Dorsolateral prefrontal cortex (tissue), 120 donors: ENCODE measurements at regions of chr14 and their contacts with region 1.

Region 1: DNA sequence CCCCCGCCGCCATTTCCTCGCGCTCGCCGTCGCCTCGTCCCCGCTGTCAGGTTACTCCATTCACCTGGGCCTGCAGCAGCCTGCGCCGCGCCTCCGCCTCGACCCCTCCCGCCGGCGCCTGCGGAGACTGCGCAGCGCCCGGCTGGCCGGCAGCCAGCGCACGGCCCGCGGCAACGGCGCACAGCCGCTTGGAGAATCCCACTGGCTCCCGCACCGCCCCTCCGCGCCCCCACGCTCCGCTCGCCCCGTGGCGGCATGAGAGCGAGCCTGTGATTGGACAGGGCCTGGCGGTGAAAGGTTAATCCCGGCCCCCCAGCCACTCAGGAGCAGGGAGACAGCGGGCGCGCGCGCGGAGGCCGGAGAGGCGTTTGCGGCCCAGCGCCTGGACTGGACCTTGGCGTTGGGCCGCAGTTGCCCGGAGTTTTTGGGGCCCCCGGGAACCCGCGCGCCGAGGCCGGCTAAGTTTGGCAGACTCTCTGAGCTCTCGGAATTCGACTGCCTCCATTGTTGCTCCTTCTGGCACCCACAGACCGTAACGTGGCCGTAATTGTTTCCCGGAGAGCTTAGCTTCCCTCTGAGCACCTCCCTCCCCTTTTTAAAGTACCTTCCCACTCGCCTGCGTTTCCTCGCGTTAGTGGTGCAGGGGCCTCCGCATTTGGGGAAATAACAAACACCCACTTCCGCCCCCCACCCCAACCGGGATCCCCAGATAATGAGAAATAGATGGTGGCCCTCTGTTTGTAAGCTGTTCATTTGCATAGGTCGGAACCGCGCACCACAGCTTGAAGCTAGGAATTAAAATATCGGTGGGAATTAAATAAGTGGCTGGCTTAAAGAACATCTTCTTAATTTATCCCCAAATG is at the start of gene DICER1:
- DNase-seq: peak; percentile 96 to 99 (median 98)
- H3K4me3 ChIP-seq: peak within 1 kb of the TSS; percentile 63 to 95 (median 88)
- H3K27ac ChIP-seq: peak within 1 kb of the TSS; percentile 81 to 99 (median 95)
- H3K27me3 ChIP-seq: no peaks in the 10 kb centered on the region
- CTCF ChIP-seq: peak in 23 of 56 donors; percentile 1 to 51 (median 18)
- total RNA-seq, gene DICER1: 58.4 to 196 (median 82.9) TPM

Region 2: GRCh38 chr14:94918908-94919307 is 238.7 kb before region 1 on chr14:
- intact Hi-C with region 1: no loop called
- DNase-seq: no peak
- H3K4me3 ChIP-seq: no peak overlapping the region
- H3K27ac ChIP-seq: no peak overlapping the region
- H3K27me3 ChIP-seq: peaks cover 0 to 9% (median 0%) of the 10 kb centered on the region in 45 donors
- CTCF ChIP-seq: no peak

Region 3: DNA sequence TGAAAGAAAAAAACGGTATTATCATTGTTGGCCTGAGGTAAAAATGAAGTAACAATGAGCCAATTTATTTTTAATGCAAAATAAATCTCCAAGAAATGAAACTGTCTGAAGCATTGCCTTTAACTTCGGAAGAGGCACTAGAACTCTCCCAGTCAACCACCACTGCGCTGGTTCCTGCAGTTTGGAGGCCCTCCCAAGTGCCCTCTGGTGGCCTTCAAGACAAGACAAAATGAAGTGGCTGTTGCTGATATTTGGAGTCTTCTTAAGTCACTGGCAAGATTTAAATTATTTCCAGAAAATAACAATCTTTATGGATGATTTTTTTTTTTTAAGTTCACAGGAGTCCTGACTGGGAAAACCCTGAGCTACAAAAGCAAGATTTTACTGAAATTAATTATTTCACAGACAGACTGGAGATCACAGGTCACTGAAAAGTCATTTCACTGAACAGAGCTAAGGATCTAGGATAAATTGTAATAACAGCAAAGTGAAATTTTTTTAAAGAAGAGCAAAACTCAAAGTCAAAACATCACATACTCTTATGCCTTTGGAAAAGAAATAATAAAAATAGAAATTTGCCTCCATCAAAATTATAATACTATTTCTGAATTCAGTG is 58.5 kb before region 1 on chr14:
- intact Hi-C with region 1: loop called in 1 of 2 experiments (anchors 2 kb)
- DNase-seq: peak; percentile 27 to 67 (median 58)
- H3K4me3 ChIP-seq: no peak overlapping the region
- H3K27ac ChIP-seq: peak overlapping the region in 15 of 59 donors; percentile 4 to 80 (median 34)
- H3K27me3 ChIP-seq: no peaks in the 10 kb centered on the region
- CTCF ChIP-seq: peak in 55 of 56 donors; percentile 37 to 86 (median 67)

Region 4: DNA sequence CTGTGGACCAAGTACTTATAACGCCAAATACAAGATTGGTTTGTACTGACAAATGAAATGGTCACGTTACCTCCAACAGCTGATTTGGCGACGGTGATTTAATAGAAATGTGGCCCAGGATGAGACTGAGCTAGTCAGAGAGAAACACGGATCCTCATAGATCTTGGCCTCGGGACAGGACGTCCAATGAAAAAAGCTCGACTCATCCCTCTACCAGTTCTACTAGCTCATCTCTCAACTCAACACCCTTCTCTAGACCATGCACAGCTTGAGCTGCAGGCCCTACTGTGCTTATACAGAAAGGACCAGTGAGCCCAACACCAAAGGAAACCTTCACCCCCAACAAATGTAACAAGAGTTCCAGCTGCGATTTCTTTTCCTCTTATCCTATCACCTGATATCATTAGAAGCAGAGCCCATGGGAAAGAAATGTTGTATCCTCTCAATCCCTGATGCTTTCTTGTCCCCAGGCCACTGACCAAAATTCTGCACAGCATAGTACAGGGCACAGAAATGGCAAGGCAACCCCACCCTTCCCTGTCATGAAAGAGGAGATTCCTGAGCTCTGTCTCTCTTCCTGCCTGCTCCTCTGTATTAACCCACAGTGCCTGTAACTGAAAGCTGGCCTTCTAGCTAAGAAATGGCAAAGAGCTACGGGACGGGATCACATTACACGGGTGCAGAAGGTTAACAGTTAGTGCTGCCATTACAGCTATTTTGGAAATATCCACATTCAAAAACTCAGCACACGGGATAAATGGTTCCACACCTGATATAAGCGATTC is 39.4 kb before region 1 on chr14:
- intact Hi-C with region 1: loop called (anchors 2 to 5 kb)
- DNase-seq: no peak
- H3K4me3 ChIP-seq: no peak overlapping the region
- H3K27ac ChIP-seq: peak overlapping the region in 57 of 59 donors; percentile 29 to 98 (median 86)
- H3K27me3 ChIP-seq: no peaks in the 10 kb centered on the region
- CTCF ChIP-seq: no peak

Region 5: DNA sequence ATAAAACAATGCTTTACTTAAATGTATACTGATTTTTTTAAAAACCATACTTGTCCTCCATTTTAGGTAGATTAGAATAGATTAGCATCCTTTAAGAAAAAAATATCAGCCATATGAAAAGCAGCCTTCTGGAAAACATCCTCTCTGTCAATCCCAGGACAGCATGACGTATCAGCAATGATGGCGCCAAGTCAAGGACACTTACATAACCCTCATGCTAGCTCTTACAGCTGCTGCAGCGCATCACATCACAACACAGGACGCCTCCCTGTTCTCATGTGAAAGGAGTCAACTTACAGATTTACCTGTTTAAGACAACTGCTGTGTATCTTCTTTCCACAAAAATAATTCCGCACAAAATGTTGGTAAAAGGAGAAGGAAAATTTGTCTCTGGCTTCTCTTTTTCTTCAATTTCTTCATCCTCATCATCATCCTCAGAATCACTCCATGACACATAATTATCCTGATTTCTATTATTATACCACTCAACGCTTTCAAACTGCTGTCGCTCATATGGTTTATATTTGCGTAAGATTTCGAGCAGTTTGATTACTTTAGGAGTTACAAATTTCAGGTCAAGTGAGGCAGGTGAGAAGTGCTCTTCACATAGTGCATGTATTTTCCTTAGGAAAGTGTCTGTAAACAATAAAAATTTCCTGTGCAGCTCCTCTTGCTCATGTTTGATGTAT is 33.5 kb before region 1 on chr14:
- intact Hi-C with region 1: loop called (anchors 2 to 5 kb)
- DNase-seq: peak in 5 of 10 donors; percentile 29 to 81 (median 46)
- H3K4me3 ChIP-seq: no peak overlapping the region
- H3K27ac ChIP-seq: peak overlapping the region in 54 of 59 donors; percentile 1 to 98 (median 71)
- H3K27me3 ChIP-seq: no peaks in the 10 kb centered on the region
- CTCF ChIP-seq: no peak